ENCODE measurements at regions of chr10 and their contacts with region 1.

Region 1: GRCh38 chr10:104127411-104127810 is 5.4 kb downstream of the SFR1 start:
- DNase-seq: peak; percentile 47 to 65 (median 62)
- H3K4me3 ChIP-seq: no peak overlapping the region
- H3K27ac ChIP-seq: no peak overlapping the region
- H3K4me1 ChIP-seq: peaks cover 5 to 15% (median 12%) of the 10 kb centered on the region in 4 experiments
- H3K27me3 ChIP-seq: no peaks in the 10 kb centered on the region

Region 2: GRCh38 chr10:104146882-104147281 is 19.5 kb after region 1 on chr10:
- CTCF ChIA-PET with region 1: interaction called, 12 read pairs
- POLR2A ChIA-PET with region 1: no interaction called
- DNase-seq: no peak
- H3K4me3 ChIP-seq: no peak overlapping the region
- H3K27ac ChIP-seq: no peak overlapping the region
- H3K4me1 ChIP-seq: no peaks in the 10 kb centered on the region
- H3K27me3 ChIP-seq: no peaks in the 10 kb centered on the region